Colonic mucosa (tissue), 4 donors: ENCODE measurements at regions of chr9 and their contacts with region 1.

Region 1: GRCh38 chr9:72856972-72857623 is 95.8 kb downstream of the ALDH1A1 start:
- DNase-seq: peak; percentile 39
- H3K4me3 ChIP-seq: no peak overlapping the region
- H3K27ac ChIP-seq: no peak overlapping the region
- H3K4me1 ChIP-seq: no peaks in the 10 kb centered on the region
- H3K27me3 ChIP-seq: no peaks in the 10 kb centered on the region
- CTCF ChIP-seq: peak; percentile 60

Region 2: GRCh38 chr9:73023025-73023541 is 166.0 kb after region 1 on chr9:
- intact Hi-C with region 1: loop called (anchors 5 kb)
- DNase-seq: peak; percentile 64
- H3K4me3 ChIP-seq: no peak overlapping the region
- H3K27ac ChIP-seq: no peak overlapping the region
- H3K4me1 ChIP-seq: no peaks in the 10 kb centered on the region
- H3K27me3 ChIP-seq: no peaks in the 10 kb centered on the region
- CTCF ChIP-seq: peak; percentile 74

Region 3: GRCh38 chr9:73081979-73082657 is 225.0 kb after region 1 on chr9:
- intact Hi-C with region 1: loop called (anchors 5 kb)
- DNase-seq: no peak
- H3K4me3 ChIP-seq: no peak overlapping the region
- H3K27ac ChIP-seq: no peak overlapping the region
- H3K4me1 ChIP-seq: no peaks in the 10 kb centered on the region
- H3K27me3 ChIP-seq: no peaks in the 10 kb centered on the region
- CTCF ChIP-seq: peak; percentile 60

Region 4: DNA sequence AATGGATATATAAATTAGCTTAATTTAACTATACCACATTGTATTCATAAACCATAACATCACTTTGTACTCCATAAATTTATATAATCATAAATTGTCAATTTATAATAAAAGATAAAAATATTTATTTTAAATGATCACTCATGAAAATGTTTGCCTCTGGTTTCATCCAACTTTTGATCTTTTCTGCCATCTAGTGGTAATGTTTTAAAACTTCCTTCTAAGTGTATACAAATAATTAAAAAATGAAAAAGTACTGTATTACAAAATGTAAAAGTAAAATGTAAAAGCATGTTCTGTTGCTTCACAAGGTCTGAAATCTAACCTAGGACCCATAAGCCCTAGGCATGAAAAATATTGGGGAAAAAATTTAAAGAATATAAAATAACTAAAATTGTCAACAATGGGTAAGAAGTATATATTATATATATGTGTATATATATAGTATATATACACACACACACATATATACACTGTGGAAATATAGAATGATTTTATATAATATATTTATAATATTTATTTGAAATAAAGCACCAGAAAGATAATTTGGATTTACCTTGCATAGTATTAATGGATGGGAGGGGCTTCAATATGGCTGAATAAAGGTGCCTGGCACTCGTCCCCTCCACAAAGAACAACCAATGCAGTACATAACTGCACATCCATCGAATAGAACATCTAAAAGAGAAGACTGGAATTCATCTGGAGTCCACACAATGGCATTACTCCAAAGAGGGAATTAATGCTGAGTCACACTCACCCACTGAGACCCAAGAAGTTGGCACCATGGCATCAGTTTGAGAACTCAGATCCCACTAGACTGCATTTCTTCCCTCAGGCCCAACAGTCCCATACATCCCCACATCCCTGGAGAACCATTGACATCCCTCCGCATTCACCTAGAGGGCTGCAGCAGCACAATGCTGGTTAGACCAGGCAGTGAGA is 327.1 kb after region 1 on chr9:
- intact Hi-C with region 1: loop called (anchors 5 kb)
- DNase-seq: no peak
- H3K4me3 ChIP-seq: no peak overlapping the region
- H3K27ac ChIP-seq: no peak overlapping the region
- H3K4me1 ChIP-seq: no peaks in the 10 kb centered on the region
- H3K27me3 ChIP-seq: no peaks in the 10 kb centered on the region
- CTCF ChIP-seq: peak; percentile 53